AG04449 (cell line): ENCODE measurements at regions of chr11 and their contacts with region 1.

Region 1: GRCh38 chr11:75896843-75897419 is 81.9 kb downstream of the UVRAG start:
- DNase-seq: peak; percentile 16
- H3K4me3 ChIP-seq: no peak overlapping the region
- CTCF ChIP-seq: peak; percentile 31

Region 2: GRCh38 chr11:75910426-75911145 is 13.7 kb after region 1 on chr11:
- CTCF ChIA-PET with region 1: interaction called, 12 read pairs
- POLR2A ChIA-PET with region 1: no interaction called
- DNase-seq: no peak
- H3K4me3 ChIP-seq: no peak overlapping the region
- CTCF ChIP-seq: no peak

Region 3: DNA sequence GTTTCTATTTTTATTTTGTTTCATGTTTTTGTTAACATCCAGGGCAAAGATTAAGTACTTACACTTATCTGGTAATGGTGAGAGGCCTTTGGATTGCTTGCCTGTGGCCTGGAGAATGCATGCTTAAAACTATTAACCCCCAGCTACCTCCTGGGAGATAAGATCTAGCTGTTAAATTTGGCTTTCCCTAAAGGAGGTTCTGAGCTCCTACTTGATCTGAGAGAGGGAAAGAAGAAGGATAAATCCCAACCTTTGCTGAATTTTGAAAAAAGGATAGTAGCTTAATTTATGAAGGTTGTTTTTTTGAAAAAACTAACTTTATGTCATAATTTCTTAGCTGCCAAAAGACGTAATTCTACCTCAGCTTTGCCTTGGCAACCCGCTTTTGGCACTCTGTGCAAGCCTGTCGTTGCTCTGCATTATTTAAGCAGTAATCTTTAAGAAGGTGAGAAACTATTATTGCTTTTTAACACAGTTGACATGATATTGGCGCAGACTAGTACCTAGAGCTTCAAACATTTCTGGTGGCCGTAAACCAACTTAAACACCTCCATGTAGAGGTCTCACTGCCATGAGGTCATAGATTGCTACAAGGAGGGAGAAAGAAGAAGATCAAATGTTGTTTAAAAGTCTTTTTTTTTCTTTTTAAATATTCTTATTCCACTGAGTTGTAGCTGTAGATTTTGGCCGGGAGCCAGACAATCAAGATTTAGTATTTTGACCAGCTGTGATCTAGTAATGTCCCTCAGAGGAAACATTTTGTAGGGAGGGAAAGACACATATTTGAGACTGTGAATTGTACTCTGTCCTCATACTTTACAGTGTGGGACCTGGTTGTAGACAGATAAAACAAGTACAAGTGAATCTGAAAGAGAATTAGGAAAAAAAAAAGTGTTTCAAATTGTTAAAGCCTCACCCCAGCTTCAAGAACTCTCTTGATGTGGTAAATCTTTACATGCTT is 235.0 kb after region 1 on chr11:
- CTCF ChIA-PET with region 1: interaction called, 12 read pairs
- POLR2A ChIA-PET with region 1: no interaction called
- DNase-seq: no peak
- H3K4me3 ChIP-seq: no peak overlapping the region
- CTCF ChIP-seq: no peak